Sigmoid colon (tissue), 7 donors: ENCODE measurements at regions of chr12 and their contacts with region 1.

Region 1: DNA sequence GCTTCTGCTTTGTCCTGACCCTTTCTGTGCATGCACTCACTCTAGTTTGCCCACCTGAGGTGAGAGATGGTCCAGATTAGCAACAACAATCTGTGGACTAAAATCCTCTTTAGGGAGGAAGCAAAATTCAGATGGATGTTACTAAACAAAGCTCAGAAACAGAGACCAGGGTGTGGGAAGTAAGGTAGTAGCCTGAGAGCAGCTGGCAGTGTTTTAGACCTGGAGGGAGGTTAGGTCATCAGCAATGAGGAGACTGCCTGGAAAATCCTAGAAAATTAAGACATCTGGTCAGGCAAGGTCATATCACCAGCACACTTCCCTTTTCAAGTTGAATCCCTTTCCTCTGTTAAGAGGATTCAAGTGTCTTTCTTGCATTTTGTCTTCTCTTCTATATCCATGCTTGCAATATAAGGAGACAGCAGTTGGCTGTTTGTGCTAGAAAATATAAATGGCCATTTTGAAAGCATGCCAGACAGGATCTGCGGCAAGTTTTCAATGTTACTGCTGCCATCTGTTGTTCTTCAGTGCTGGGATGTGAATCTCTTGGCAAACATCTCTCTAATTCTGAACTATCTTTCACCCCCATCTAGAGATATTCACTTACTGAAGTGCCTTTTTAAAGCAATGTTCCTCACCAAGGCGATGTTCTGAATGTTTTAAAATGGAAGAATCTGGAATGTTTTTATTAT is 266.4 kb downstream of the NAV3 start:
- DNase-seq: no peak
- H3K4me3 ChIP-seq: no peak overlapping the region
- H3K27ac ChIP-seq: peak overlapping the region in 2 of 4 donors; percentile 5 to 27
- H3K4me1 ChIP-seq: peaks cover 0 to 13% (median 7%) of the 10 kb centered on the region in 4 donors
- H3K27me3 ChIP-seq: no peaks in the 10 kb centered on the region
- CTCF ChIP-seq: no peak
- EP300 ChIP-seq: no peak
- POLR2A ChIP-seq: no peak

Region 2: GRCh38 chr12:78002878-78003277 is 94.2 kb before region 1 on chr12:
- intact Hi-C with region 1: loop called (anchors 10 kb)
- DNase-seq: no peak
- H3K4me3 ChIP-seq: no peak overlapping the region
- H3K27ac ChIP-seq: no peak overlapping the region
- H3K4me1 ChIP-seq: no peaks in the 10 kb centered on the region
- H3K27me3 ChIP-seq: no peaks in the 10 kb centered on the region
- CTCF ChIP-seq: no peak
- EP300 ChIP-seq: no peak
- POLR2A ChIP-seq: no peak